ENCODE measurements at regions of chr20 and their contacts with region 1.

Region 1: DNA sequence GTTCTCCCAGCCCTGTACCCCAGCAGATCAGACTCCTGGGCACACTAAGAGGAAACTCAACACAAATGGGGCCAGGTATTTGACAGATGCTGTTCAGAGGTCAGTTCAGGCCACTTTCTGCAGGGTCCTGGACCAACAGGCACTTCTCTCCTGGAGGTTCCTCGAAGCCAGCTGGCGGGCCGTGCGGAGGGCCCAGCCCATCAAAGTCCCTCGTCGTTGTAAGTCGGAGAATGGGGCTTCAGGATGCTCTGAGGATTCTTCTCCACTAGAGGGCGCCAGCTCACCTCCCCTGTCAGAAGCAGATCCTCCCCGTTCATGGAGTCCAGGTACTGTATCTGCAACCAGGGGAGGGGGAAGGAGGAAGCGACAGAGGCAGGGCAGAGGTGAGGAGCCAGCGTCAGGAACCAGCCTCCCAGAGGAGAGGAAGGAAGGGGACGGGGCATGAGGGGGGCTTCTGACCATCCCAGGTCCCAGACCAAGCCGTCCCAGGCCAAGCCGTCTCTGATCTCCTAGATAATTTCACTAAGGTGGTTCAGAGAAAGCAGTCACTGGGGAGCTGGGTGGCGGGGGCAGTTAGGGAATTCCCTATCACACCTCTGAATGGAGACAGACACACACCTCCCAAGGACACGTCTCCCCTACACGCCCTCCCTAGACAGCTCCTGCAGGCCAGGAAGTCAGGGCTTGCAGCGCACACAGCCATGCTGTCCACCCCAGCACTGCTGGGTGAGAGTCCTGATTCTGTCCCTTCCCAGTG is 11.7 kb upstream of the FAM83C start:
- DNase-seq: peak; percentile 79 to 90
- H3K4me3 ChIP-seq: no peak overlapping the region
- H3K27ac ChIP-seq: peak overlapping the region; percentile 92
- H3K4me1 ChIP-seq: peaks cover 73% of the 10 kb centered on the region
- H3K27me3 ChIP-seq: no peaks in the 10 kb centered on the region
- CTCF ChIP-seq: peak; percentile 95

Region 2: DNA sequence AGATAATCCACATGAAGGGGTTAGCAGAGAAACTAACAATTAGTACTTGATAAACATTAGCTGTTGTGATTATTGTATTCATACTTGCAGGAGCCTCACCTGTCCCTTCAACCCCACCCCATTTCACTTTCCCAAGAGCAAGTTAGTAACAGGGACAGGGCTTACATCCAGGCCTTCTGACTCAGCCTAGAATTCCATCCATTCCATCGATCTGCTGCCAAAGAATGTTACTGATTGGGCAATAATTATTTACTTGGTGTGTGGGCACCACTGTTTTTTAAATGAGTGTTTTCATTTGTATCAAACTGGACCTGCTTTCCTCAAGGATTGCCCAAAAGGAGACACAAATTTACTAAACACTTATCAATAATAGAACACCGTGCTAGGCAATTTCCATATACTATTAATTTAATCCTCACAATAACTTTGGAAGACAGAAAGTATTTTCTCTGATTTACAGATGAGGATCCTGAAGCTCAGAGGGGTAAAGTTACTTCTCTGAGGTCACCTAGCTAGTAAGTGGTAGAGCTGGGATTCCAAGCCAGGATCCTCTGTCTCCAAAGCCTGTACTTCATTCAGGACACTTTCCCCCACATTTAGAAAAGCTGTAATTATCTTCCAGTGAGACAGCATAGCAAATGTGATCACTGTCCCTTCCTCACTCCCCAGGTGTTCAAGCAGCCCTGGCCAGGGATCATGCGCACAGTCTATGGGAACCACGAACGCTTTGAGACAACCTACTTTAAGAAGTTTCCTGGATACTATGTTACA is 381.1 kb before region 1 on chr20:
- CTCF ChIA-PET with region 1: no interaction called
- POLR2A ChIA-PET with region 1: no interaction called
- intact Hi-C with region 1: no loop called
- DNase-seq: peak; percentile 65 to 96
- H3K4me3 ChIP-seq: peak overlapping the region; percentile 19; the same call in 1 of the 2 replicates
- H3K27ac ChIP-seq: peak overlapping the region; percentile 89
- H3K4me1 ChIP-seq: peaks cover 76% of the 10 kb centered on the region
- H3K27me3 ChIP-seq: no peaks in the 10 kb centered on the region
- CTCF ChIP-seq: no peak

Region 3: GRCh38 chr20:35257175-35257909 is 46.6 kb before region 1 on chr20:
- CTCF ChIA-PET with region 1: no interaction called
- POLR2A ChIA-PET with region 1: no interaction called
- intact Hi-C with region 1: no loop called
- DNase-seq: no peak
- H3K4me3 ChIP-seq: no peak overlapping the region
- H3K27ac ChIP-seq: no peak overlapping the region
- H3K4me1 ChIP-seq: no peaks in the 10 kb centered on the region
- H3K27me3 ChIP-seq: no peaks in the 10 kb centered on the region
- CTCF ChIP-seq: no peak

Region 4: GRCh38 chr20:35277531-35278395 is 26.1 kb before region 1 on chr20 and contains the start of gene MMP24OS:
- CTCF ChIA-PET with region 1: no interaction called
- POLR2A ChIA-PET with region 1: interaction called, 4 read pairs
- intact Hi-C with region 1: loop called (anchors 2 kb)
- DNase-seq: peak; percentile 77 to 95
- H3K4me3 ChIP-seq: peak within 1 kb of the TSS; percentile 88
- H3K27ac ChIP-seq: peak within 1 kb of the TSS; percentile 71
- H3K4me1 ChIP-seq: peaks cover 16% of the 10 kb centered on the region
- H3K27me3 ChIP-seq: no peaks in the 10 kb centered on the region
- CTCF ChIP-seq: no peak
- total RNA-seq, gene MMP24OS: 59.3 and 79.0 TPM in 2 replicates

Region 5: DNA sequence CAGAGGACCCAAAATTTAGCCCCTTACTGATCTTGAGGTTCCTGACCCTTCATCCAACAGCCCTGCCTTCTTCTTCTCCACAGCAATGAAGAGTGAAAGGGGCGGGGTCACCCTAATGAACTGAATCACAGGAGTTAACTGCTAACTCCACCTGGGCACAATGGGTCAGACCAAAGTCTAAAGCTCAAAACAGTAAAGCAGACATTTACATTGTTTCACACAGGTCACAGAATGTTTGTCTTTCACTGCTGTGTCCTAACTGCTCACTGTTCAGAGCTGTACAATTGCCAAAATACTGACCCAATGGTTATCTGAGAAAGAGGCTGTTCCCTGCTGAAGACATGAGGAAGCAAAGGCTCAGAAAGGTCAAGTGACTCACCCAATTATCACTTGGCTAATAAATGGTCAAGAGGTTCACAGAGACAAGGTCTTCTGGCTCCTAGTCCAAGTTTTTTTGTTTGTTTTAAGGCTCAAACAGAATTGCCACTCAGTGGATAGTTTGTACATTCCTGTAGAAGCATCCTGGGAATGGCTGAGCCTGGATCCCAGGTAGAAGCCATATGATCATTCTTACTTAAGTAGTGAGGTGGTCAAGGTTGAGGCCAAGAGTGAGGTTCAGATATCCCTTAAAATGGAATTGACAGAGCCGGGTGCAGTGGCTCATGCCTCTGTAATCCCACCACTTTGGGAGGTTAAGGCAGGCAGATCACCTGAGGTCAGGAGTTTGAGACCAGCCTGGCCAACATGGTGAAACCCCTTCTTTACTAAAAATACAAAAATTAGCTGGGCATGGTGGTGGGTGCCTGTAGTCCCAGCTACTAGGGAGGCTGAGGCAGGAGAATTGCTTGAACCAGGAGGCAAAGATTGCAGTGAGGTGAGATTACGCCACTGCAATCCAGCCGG is 23.4 kb after region 1 on chr20:
- CTCF ChIA-PET with region 1: interaction called, 8 read pairs
- POLR2A ChIA-PET with region 1: interaction called, 3 read pairs
- intact Hi-C with region 1: loop called (anchors 2 kb)
- DNase-seq: peak in 1 of 2 experiments; percentile 98
- H3K4me3 ChIP-seq: no peak overlapping the region
- H3K27ac ChIP-seq: peak overlapping the region; percentile 58
- H3K4me1 ChIP-seq: peaks cover 36% of the 10 kb centered on the region
- H3K27me3 ChIP-seq: no peaks in the 10 kb centered on the region
- CTCF ChIP-seq: no peak

Region 6: DNA sequence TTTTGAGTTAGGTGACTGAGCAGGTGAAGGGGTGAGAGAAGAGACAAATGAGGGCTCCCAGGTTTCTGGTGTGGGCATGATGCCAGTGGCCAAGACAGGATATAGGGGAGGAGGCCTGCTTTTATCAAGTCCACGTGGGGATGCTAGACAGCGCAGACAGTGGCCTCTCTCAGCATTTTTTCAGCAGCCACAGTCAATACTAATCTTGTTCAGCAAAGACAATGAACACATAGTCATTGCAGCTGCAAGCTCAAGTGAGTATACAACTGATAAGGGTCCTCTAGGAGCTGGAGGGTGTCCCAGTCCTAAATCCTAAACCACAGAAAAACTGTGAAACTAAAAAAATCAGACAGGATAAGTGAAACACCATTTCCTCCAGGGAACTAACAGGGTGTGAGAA is 59.3 kb after region 1 on chr20:
- CTCF ChIA-PET with region 1: interaction called, 13 read pairs
- POLR2A ChIA-PET with region 1: no interaction called
- intact Hi-C with region 1: no loop called
- DNase-seq: no peak
- H3K4me3 ChIP-seq: no peak overlapping the region
- H3K27ac ChIP-seq: no peak overlapping the region
- H3K4me1 ChIP-seq: peaks cover 3% of the 10 kb centered on the region; the same call in 1 of the 2 replicates
- H3K27me3 ChIP-seq: no peaks in the 10 kb centered on the region
- CTCF ChIP-seq: no peak

Region 7: GRCh38 chr20:35421322-35421721 is 117.4 kb after region 1 on chr20:
- CTCF ChIA-PET with region 1: no interaction called
- POLR2A ChIA-PET with region 1: no interaction called
- intact Hi-C with region 1: no loop called
- DNase-seq: no peak
- H3K4me3 ChIP-seq: no peak overlapping the region
- H3K27ac ChIP-seq: no peak overlapping the region
- H3K4me1 ChIP-seq: no peaks in the 10 kb centered on the region
- H3K27me3 ChIP-seq: no peaks in the 10 kb centered on the region
- CTCF ChIP-seq: no peak

Region 8: GRCh38 chr20:35629427-35630145 is 325.7 kb after region 1 on chr20:
- CTCF ChIA-PET with region 1: no interaction called
- POLR2A ChIA-PET with region 1: no interaction called
- intact Hi-C with region 1: no loop called
- DNase-seq: no peak
- H3K4me3 ChIP-seq: no peak overlapping the region
- H3K27ac ChIP-seq: no peak overlapping the region
- H3K4me1 ChIP-seq: no peaks in the 10 kb centered on the region
- H3K27me3 ChIP-seq: no peaks in the 10 kb centered on the region
- CTCF ChIP-seq: no peak

Measured in PC-9 (cell line).